Activated CD4-positive, alpha-beta memory T cell treated with anti-CD3 and anti-CD28 coated beads for 36 hours (primary cell): ENCODE measurements at regions of chr22 and their contacts with region 1.

Region 1: DNA sequence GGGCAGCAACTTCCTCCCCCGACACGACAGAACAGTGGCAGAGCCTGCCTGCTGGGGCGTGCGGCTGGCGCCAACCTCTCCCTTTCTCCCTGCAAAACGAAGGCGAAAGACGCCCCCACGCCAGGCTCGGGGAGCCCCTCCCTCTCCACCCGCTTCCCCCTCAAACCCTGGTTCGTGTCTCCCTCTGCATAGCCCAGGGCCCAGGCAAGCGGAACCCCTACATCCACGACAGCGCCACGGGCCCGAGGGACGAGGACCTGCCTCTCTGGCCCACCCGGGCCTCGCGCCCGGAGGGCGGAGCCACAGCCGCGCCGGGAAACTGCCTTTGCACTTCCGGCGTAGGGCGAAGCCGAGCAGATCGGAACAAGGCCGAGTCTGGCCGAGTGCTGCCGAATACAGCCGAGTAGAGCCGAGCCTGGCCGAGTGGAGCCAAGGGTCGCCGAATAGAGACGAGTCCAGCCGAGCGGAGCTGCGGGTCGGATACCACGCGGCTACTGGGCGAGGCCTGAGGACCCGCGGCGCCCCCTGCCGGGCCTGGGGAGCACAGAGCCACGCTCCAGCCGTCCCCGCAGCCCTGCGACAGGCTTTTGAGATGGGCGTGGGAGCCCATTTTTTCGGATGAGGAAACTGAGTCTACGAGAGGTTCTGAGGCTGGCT is 11.2 kb upstream of the C1QTNF6 start:
- DNase-seq: peak; percentile 100
- H3K4me3 Mint-ChIP-seq: peak overlapping the region; percentile 85
- H3K27ac Mint-ChIP-seq: peak overlapping the region; percentile 96
- H3K4me1 Mint-ChIP-seq: peaks cover 44% of the 10 kb centered on the region
- H3K27me3 Mint-ChIP-seq: no peaks in the 10 kb centered on the region

Region 2: GRCh38 chr22:36856121-36856791 is 343.0 kb before region 1 on chr22:
- CTCF ChIA-PET with region 1: interaction called, 8 read pairs
- POLR2A ChIA-PET with region 1: no interaction called
- intact Hi-C with region 1: loop called (anchors 10 kb)
- DNase-seq: peak; percentile 96
- H3K4me3 Mint-ChIP-seq: no peak overlapping the region
- H3K27ac Mint-ChIP-seq: no peak overlapping the region
- H3K4me1 Mint-ChIP-seq: peaks cover 28% of the 10 kb centered on the region
- H3K27me3 Mint-ChIP-seq: peaks cover 2% of the 10 kb centered on the region

Region 3: DNA sequence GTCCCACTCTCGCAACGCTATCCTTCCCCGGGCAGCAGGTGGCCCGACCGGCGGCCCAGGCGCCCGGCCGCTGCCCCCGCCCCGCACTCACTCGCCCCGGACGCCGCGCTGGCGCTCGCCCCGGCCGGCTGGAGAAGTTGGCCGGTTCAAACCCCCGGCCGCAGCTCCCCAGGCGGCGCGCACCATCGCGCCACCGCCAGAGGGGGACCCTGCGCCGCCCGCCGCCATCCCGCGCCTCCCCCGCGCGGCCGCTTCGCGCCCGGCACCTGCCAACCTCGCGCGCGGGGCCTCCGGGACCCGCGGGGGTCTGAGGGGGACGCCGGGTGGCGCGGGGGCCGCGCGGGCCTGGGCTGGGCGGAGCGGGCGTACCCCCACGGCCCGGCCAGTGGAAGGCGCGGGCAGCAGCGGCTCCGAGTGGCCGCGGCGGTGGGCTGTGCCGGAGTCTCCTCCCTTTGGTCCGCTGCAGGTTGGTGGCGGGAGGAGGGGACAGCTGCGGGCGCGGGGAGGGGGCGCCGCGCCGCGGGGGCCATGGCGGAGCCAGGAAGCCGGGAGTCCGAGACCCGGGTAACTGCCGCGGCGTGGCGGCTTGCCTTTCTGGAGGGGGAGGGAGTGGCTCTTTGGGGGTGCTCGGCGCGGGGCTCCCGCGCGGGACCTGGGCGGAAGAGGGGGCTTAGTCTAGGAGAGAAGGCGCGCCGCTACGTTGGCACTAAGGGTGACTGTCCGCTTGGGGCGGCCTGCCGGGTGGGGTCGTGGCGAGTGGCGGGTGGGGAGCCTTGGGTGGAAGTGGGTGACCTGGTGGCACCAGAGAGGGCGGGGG is 179.7 kb before region 1 on chr22 and contains the starts of genes MPST and TST:
- CTCF ChIA-PET with region 1: interaction called, 11 read pairs
- POLR2A ChIA-PET with region 1: no interaction called
- intact Hi-C with region 1: no loop called
- DNase-seq: peak; percentile 50
- H3K4me3 Mint-ChIP-seq: peak within 1 kb of the TSS; percentile 89
- H3K27ac Mint-ChIP-seq: no peak within 1 kb of the TSS
- H3K4me1 Mint-ChIP-seq: peaks cover 9% of the 10 kb centered on the region
- H3K27me3 Mint-ChIP-seq: peaks cover 3% of the 10 kb centered on the region
- total RNA-seq, gene MPST: 16.9 to 17.6 TPM
- total RNA-seq, gene TST: 5.5 TPM

Region 4: DNA sequence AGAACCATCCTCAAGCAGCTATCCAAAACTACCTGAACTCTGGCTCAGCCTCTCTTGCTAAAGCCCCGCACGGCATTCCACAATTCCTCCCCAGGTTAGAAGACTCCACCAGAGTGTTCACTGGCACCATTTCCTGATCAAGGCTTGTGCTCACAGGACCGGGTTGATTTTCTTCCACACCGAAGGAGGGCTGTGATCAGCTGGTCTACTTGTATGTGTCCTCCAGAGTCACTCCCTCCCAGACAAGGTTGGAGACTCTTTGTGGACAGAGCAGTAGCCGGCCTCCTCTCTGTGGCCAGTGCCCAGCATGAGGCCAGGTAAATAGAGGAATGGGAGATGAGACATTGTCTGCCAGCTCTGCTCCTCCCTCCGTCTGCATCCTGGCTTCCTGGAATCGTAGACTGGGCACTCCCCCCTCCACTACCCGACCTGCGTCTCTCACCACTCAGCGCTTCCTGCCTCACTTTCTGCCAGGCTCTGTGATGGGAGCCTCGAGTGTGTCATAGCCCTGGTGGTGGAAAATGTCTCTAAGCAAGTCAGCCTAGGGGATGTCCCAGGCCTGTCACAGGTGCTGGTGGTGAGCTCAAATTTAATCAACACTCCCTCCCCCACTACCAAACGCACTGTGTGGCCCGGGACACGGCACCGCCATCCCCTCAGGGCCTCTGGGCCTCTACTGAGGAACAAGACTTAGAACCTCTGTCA is 77.2 kb before region 1 on chr22:
- CTCF ChIA-PET with region 1: interaction called, 32 read pairs
- POLR2A ChIA-PET with region 1: interaction called, 15 read pairs
- intact Hi-C with region 1: loop called (anchors 1 kb)
- DNase-seq: peak; percentile 97
- H3K4me3 Mint-ChIP-seq: peak overlapping the region; percentile 88
- H3K27ac Mint-ChIP-seq: peak overlapping the region; percentile 100
- H3K4me1 Mint-ChIP-seq: peaks cover 81% of the 10 kb centered on the region
- H3K27me3 Mint-ChIP-seq: no peaks in the 10 kb centered on the region

Region 5: GRCh38 chr22:37157516-37158289 is 41.5 kb before region 1 on chr22:
- CTCF ChIA-PET with region 1: interaction called, 24 read pairs
- POLR2A ChIA-PET with region 1: interaction called, 25 read pairs
- intact Hi-C with region 1: loop called (anchors 1 kb)
- DNase-seq: peak; percentile 59
- H3K4me3 Mint-ChIP-seq: no peak overlapping the region
- H3K27ac Mint-ChIP-seq: no peak overlapping the region
- H3K4me1 Mint-ChIP-seq: peaks cover 58% of the 10 kb centered on the region
- H3K27me3 Mint-ChIP-seq: no peaks in the 10 kb centered on the region

Region 6: GRCh38 chr22:37218771-37219411 is 19.7 kb after region 1 on chr22:
- CTCF ChIA-PET with region 1: interaction called, 41 read pairs
- POLR2A ChIA-PET with region 1: interaction called, 6 read pairs
- intact Hi-C with region 1: loop called (anchors 2 kb)
- DNase-seq: peak; percentile 85
- H3K4me3 Mint-ChIP-seq: peak overlapping the region; percentile 76
- H3K27ac Mint-ChIP-seq: peak overlapping the region; percentile 95
- H3K4me1 Mint-ChIP-seq: peaks cover 76% of the 10 kb centered on the region
- H3K27me3 Mint-ChIP-seq: no peaks in the 10 kb centered on the region

Region 7: DNA sequence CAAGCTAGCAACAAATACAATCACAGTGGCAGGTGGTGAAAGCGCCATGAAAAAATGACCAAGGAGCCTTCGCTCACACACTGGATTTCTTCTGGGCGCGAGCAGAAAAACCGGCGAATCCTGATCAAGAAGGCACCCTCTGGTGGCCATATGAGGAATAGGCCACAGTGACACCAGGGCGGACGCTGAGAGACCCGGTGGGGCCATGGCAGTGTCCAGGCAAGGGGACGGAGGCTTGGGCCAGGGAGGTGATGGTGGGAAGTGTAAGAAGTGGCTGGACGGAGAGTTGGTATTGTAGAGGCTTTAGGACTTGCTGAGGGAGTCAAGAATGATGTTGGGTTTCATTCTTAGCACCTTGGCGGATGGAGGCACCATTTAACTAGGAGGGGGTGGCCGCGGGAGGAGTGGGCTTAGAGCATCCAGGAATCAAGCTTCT is 61.7 kb after region 1 on chr22:
- CTCF ChIA-PET with region 1: interaction called, 38 read pairs
- POLR2A ChIA-PET with region 1: no interaction called
- intact Hi-C with region 1: loop called (anchors 2 kb)
- DNase-seq: peak; percentile 76
- H3K4me3 Mint-ChIP-seq: peak overlapping the region; percentile 17
- H3K27ac Mint-ChIP-seq: peak overlapping the region; percentile 65
- H3K4me1 Mint-ChIP-seq: peaks cover 20% of the 10 kb centered on the region
- H3K27me3 Mint-ChIP-seq: no peaks in the 10 kb centered on the region